ENCODE measurements at regions of chr19 and their contacts with region 1.

Region 1: GRCh38 chr19:18777301-18778075 is 13.6 kb downstream of the COMP start:
- DNase-seq: no peak
- H3K4me3 ChIP-seq: no peak overlapping the region
- H3K27ac ChIP-seq: no peak overlapping the region
- H3K4me1 ChIP-seq: no peaks in the 10 kb centered on the region; a peak in 1 of 7 replicates
- H3K27me3 ChIP-seq: peaks cover 14 to 93% (median 84%) of the 10 kb centered on the region in 4 experiments
- CTCF ChIP-seq: no peak
- EP300 ChIP-seq: no peak
- POLR2A ChIP-seq: no peak
- RAD21 ChIP-seq: no peak

Region 2: GRCh38 chr19:18762125-18763023 is 15.1 kb before region 1 on chr19:
- CTCF ChIA-PET with region 1: interaction called, 10 read pairs
- POLR2A ChIA-PET with region 1: interaction called, 35 read pairs
- DNase-seq: no peak
- H3K4me3 ChIP-seq: no peak overlapping the region
- H3K27ac ChIP-seq: no peak overlapping the region
- H3K4me1 ChIP-seq: peaks cover 0 to 6% (median 1%) of the 10 kb centered on the region in 4 experiments; a peak in 3 of 7 replicates
- H3K27me3 ChIP-seq: peaks cover 2 to 30% (median 23%) of the 10 kb centered on the region in 4 experiments; a peak in 5 of 7 replicates
- CTCF ChIP-seq: no peak
- EP300 ChIP-seq: no peak
- POLR2A ChIP-seq: no peak
- RAD21 ChIP-seq: no peak; a peak in 1 of 4 replicates

Measured in H1 (cell line).